IMR-90 (cell line): ENCODE measurements at regions of chr17 and their contacts with region 1.

Region 1: DNA sequence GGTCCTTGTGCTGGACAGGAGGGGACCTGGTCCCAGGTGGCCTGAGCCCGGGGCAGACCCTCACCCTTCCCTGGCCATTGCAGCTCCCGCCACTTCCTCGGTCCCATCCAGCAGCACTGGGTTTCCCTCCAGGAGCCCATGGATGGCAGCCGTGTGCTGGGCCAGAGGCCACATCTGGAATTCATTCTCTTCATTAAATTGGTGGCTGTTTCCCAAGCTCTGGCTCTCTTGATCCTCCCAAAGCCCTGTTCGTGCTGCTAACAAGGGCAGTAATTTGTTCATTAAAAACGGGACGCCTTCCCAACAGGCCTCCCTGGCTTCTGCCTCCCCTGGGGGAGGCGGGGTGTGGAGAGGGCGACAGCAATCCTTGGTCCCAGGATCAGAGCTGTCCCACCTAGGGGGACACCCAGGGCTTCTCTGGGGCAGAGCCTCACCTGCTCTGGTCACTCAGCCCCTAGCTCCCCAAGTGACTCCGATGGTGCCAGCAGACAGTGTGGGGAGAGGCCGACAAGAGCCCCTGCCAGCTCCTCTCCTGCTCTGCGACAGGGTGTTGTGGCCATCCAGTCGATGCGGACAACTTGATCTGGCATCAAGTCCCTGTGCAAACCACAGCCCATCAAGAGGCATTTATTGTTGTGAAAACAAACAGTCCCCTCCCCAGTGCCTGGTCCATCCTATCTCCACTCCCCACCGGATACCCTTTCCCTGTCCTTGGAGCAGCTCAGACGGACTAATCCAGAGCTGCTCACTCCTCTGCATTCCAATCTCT is 44.0 kb downstream of the SDK2 start:
- DNase-seq: no peak
- ATAC-seq: no peak
- H3K4me3 ChIP-seq: no peak overlapping the region
- H3K27ac ChIP-seq: no peak overlapping the region
- H3K4me1 ChIP-seq: no peaks in the 10 kb centered on the region
- H3K27me3 ChIP-seq: no peaks in the 10 kb centered on the region
- CTCF ChIP-seq: no peak
- POLR2A ChIP-seq: no peak
- RAD21 ChIP-seq: no peak

Region 2: DNA sequence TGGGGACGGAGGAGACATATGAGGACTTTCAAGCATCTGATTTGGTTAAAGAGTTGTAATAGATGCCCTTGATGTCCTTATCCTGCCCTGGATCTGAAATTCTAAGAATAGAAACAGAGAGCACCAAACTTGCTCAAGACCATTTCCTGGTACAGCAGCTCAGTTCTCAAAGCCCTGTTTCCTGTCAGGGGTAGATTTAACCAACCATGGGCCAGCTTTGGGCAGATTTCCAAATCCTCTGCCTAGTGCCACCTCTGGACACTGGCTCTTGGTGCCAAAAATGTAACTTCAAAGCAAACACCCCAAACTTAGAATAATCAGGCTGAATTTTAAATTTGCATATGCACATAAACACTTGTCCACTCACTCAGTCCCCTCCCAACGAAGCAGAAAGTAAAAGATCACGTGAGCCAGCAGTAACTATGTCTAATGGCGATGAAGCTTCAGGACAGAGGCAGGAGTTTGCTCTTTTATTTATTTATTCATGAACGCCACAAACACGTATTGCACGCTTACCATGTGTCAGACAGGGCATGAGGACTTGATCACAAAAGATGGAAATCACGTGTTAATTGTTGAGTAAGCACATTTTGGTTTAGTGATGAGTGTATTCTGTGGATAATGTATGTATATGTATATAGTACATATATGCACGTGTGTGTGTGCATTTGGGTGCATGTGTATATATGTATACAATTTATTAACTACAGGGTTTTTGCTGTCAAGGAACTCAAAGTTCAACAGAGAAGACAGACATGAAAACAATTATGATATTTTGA is 67.1 kb after region 1 on chr17:
- CTCF ChIA-PET with region 1: no interaction called
- POLR2A ChIA-PET with region 1: no interaction called
- dilution Hi-C with region 1: no loop called
- in situ Hi-C with region 1: no loop called
- intact Hi-C with region 1: no loop called
- DNase-seq: no peak
- ATAC-seq: no peak
- H3K4me3 ChIP-seq: no peak overlapping the region
- H3K27ac ChIP-seq: no peak overlapping the region
- H3K4me1 ChIP-seq: no peaks in the 10 kb centered on the region
- H3K27me3 ChIP-seq: no peaks in the 10 kb centered on the region
- CTCF ChIP-seq: no peak
- POLR2A ChIP-seq: no peak
- RAD21 ChIP-seq: no peak

Region 3: DNA sequence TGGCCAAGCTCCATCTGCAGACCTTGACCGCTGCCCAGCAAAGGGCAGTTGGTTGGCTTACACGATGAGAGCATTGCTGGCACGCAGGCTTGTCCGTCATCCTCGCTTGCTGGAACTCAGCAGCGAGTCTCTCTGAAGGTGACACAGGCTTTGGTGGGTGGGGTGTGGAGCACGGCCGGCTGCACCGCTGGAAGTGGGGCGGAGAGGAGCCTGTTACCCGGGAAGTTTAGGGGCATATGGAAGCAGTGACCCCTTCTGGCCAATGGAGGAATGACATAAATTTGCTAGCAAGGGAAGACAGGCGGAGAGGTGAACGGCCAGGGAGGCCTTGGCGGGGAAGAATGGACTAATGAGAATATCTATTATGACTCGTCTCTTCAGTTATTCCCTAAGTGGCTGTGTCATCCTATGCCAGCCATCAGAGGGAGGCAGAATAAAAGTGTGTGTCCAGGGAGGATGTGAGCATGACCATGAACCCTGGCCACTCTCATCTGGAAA is 109.9 kb after region 1 on chr17:
- CTCF ChIA-PET with region 1: no interaction called
- POLR2A ChIA-PET with region 1: no interaction called
- dilution Hi-C with region 1: no loop called
- in situ Hi-C with region 1: loop called (anchors 25 kb)
- intact Hi-C with region 1: no loop called
- DNase-seq: peak; percentile 4
- ATAC-seq: no peak
- H3K4me3 ChIP-seq: no peak overlapping the region
- H3K27ac ChIP-seq: no peak overlapping the region
- H3K4me1 ChIP-seq: no peaks in the 10 kb centered on the region
- H3K27me3 ChIP-seq: no peaks in the 10 kb centered on the region
- CTCF ChIP-seq: peak; percentile 37
- POLR2A ChIP-seq: no peak
- RAD21 ChIP-seq: peak; percentile 39

Region 4: DNA sequence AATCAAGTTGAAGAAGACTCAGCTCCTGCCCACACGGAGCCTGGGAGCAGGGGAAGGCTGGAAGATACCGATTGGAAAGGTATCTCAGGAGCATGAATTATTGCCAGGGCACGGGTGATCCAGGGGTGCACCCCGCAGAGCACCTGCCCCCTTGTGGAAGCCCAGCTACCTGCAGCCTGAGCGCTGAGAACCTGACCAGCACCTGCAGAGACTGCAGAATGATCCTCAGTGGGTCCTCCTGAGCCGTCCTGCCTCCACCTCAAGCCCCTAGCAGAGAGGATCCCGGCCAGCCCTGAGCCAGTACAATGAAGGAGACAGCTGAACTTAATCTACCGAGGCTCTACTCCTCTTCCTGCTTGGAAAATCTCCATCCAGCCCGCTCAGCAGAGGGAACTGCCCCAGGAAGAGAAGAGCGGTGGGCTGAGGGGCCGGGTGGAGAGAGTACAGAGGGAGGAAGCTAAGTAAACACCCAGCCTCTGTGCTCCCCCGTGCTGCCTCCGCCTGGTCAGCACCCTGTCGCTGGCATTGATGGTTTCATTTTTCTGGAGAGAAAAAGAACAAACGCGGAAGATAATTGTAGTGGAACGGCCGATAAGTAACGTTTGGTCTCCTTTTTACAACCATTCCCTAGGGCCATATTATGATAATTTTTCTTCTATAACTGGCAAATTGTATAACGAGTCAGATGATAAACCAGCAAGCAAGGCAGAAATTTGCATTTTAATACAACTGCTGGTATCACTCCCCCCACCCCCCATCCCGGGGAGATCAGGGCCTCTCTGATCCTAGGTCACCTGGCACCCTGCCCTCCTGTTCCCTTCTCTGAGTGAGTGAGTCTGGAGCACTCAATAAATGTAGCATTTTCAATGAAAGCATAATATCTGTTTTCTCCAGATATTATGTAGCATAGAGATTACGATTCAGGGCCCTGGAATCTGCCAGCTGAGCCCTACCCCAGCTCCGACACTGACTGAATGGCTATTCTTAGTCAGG is 398.7 kb after region 1 on chr17:
- CTCF ChIA-PET with region 1: no interaction called
- POLR2A ChIA-PET with region 1: no interaction called
- dilution Hi-C with region 1: no loop called
- in situ Hi-C with region 1: loop called (anchors 25 kb)
- intact Hi-C with region 1: no loop called
- DNase-seq: no peak
- ATAC-seq: no peak
- H3K4me3 ChIP-seq: no peak overlapping the region
- H3K27ac ChIP-seq: no peak overlapping the region
- H3K4me1 ChIP-seq: no peaks in the 10 kb centered on the region
- H3K27me3 ChIP-seq: no peaks in the 10 kb centered on the region
- CTCF ChIP-seq: no peak
- POLR2A ChIP-seq: no peak
- RAD21 ChIP-seq: no peak